HEK293 (cell line): ENCODE measurements at regions of chr1 and their contacts with region 1.

Region 1: GRCh38 chr1:158087320-158087927 is 93.3 kb upstream of the CD1D start:
- H3K4me3 ChIP-seq: no peak overlapping the region
- H3K27ac ChIP-seq: no peak overlapping the region
- H3K4me1 ChIP-seq: no peaks in the 10 kb centered on the region
- CTCF ChIP-seq: peak; percentile 84

Region 2: DNA sequence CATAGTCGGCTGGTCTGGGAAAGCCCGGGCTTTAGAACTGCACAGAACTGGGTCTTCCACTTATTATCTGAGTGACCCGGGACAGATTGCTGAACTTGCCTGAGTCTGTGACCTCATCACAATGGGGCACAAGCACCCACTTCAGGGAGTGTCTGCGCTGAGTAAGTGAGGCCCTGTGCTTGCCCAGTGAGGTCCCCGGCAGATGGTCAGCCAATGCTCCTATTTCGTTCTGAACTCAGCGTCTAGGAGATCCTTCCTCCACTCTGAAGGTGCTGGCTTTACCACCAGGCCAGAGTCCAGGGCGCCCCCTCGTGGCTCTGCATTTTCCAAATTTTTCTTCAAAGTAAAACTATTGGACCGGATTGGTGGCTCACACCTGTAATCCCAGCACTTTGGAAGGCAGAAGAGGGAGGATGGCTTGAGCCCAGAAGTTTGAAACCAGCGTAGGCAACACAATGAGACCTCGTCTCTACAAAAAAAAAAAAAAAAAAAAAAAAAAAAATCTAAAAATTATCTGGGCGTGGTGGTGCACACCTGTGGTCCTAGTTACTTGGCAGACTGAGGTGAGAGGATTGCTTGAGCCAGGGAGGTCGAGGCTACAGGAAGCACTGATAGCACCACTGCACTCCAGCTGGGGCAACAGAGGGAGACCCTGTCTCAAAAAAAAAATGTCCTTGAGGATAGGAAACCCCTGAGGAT is 596.8 kb before region 1 on chr1:
- CTCF ChIA-PET with region 1: no interaction called
- POLR2A ChIA-PET with region 1: no interaction called
- H3K4me3 ChIP-seq: no peak overlapping the region
- H3K27ac ChIP-seq: no peak overlapping the region
- H3K4me1 ChIP-seq: no peaks in the 10 kb centered on the region
- CTCF ChIP-seq: peak; percentile 42

Region 3: GRCh38 chr1:157969697-157970485 is 117.5 kb before region 1 on chr1:
- CTCF ChIA-PET with region 1: interaction called, 30 read pairs
- POLR2A ChIA-PET with region 1: no interaction called
- H3K4me3 ChIP-seq: no peak overlapping the region
- H3K27ac ChIP-seq: no peak overlapping the region
- H3K4me1 ChIP-seq: no peaks in the 10 kb centered on the region
- CTCF ChIP-seq: peak; percentile 61

Region 4: DNA sequence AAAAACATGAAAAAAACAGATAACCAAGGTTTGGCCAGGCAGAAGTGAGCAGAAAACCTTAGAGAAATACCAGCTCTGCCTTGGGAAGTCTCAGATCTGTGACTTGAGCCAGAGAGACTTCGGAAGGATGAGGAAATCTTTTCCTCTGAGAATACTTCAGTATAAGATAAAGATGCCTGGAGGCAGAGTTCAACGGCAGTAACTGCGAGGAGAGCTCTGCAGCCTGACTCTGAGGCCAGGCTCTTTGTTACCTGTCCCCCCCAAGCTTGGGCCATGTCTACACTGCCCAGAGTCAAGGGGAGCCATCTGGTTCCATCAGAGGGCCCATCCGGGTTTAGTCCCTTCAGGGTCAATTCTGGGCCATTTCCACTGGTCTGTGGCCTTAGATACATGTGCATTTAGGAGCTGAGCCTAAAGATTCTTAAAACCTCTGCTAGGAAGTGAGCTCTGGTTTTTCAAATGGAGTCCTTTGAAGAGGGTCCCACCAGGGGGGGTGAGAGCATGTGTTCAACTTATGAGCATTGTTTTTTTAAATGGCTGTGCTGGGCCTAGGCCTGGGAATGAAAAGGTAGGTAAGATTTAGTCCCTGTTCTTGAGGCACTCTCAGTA is 85.3 kb before region 1 on chr1:
- CTCF ChIA-PET with region 1: interaction called, 11 read pairs
- POLR2A ChIA-PET with region 1: no interaction called
- H3K4me3 ChIP-seq: no peak overlapping the region
- H3K27ac ChIP-seq: no peak overlapping the region; the same call in 1 of the 2 replicates
- H3K4me1 ChIP-seq: peaks cover 14% of the 10 kb centered on the region
- CTCF ChIP-seq: no peak

Region 5: GRCh38 chr1:158101927-158102326 is 14.5 kb after region 1 on chr1:
- CTCF ChIA-PET with region 1: interaction called, 15 read pairs
- POLR2A ChIA-PET with region 1: no interaction called
- H3K4me3 ChIP-seq: no peak overlapping the region
- H3K27ac ChIP-seq: no peak overlapping the region
- H3K4me1 ChIP-seq: no peaks in the 10 kb centered on the region
- CTCF ChIP-seq: no peak

Region 6: GRCh38 chr1:158124999-158125398 is 37.6 kb after region 1 on chr1:
- CTCF ChIA-PET with region 1: interaction called, 262 read pairs
- POLR2A ChIA-PET with region 1: no interaction called
- H3K4me3 ChIP-seq: no peak overlapping the region
- H3K27ac ChIP-seq: no peak overlapping the region
- H3K4me1 ChIP-seq: no peaks in the 10 kb centered on the region
- CTCF ChIP-seq: peak; percentile 78